Activated naive CD4-positive, alpha-beta T cell treated with anti-CD3 and anti-CD28 coated beads for 36 hours (primary cell): ENCODE measurements at regions of chr5 and their contacts with region 1.

Region 1: GRCh38 chr5:129094087-129094923 is at the start of gene ISOC1:
- DNase-seq: peak; percentile 91
- H3K4me3 Mint-ChIP-seq: peak within 1 kb of the TSS; percentile 83
- H3K27ac Mint-ChIP-seq: peak within 1 kb of the TSS; percentile 37
- H3K4me1 Mint-ChIP-seq: peaks cover 32% of the 10 kb centered on the region
- H3K27me3 Mint-ChIP-seq: peaks cover 6% of the 10 kb centered on the region
- total RNA-seq, gene ISOC1: 25.9 to 27.4 TPM

Region 2: DNA sequence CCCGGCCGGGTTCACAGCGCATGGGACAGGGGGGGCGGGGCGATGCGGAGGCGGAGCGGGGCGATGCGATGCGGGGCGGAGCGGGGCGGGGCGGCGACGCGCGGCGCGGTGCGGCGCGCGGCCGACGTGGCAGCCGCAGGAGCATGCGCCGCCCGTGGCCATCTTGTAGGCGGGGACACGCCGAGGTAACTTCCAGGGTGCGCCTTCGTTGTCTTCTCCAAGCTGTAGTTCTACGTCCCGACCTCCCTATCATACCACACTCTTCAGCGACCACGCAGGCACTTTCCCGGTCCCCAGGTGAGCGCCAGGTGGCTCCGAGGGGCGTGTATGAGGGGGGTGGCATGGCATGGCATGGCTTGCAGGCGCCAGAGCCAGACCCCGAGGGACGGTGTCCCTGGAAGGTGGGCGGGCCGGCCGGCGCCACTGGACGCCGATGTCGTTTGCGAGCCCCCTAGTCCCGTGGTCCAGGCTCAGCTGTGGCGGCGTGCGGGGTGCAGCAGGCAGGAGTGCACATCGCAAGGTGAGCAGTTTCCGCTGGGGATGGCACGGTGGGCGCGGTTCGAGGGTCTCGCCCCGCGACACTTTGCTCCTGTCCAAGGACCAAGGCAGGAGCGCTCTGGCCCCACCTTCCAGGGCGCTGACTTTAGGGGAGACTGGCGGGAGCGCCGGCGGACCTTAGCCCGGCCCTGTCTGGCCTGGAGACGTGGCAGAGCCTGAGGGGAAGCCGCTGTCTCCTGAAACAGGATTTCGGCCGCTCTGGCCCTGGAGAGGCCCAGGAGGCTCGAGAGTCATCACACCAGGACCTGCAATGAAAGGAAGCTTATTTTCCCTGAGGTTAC is 1576.6 kb before region 1 on chr5 and contains the start of gene PRRC1:
- CTCF ChIA-PET with region 1: no interaction called
- intact Hi-C with region 1: loop called (anchors 5 kb)
- DNase-seq: peak; percentile 83
- H3K4me3 Mint-ChIP-seq: peak within 1 kb of the TSS; percentile 81
- H3K27ac Mint-ChIP-seq: peak within 1 kb of the TSS; percentile 63
- H3K4me1 Mint-ChIP-seq: peaks cover 31% of the 10 kb centered on the region
- H3K27me3 Mint-ChIP-seq: no peaks in the 10 kb centered on the region
- total RNA-seq, gene PRRC1: 34.1 to 35.1 TPM

Region 3: DNA sequence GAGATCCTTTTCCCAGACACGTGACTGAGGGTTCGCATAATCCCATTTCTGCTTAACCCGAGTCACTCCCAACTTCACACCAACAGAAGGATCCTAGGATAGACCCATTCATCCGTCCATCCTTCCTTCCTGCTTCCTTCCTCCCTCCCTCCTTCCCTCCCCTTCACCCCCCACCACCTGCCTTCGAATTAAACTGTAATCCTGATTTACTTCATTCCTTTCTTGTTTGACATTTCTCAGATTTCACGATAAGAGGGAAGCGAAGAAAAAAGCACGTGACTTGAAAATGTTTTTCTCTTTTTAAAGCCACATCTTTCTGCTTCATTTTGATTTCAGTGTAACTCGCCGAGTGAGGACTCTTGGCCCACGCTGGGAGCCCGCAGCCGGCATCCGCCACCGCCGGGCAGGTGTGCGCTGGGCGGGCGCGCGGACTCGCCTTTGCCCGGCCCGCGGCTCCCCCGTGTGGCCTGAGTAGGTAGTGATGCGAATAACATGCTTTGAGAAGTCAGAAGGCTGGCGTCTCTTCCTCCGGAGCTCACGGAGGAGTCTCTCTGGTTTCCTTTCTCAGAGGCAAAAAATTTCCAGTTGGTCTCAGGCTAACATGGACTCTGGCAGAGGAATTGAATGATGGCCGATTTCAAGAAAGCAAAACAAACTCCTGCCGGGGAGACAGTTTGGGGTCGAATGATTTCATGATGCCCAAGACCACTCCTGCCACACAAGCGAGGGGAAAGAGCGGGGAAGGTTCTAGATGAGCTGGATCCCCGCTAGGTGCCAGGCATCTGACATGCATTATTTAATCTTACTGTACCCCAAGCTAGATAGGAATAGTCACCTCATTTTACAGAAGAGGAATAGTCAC is 893.0 kb before region 1 on chr5:
- CTCF ChIA-PET with region 1: no interaction called
- intact Hi-C with region 1: loop called (anchors 10 kb)
- DNase-seq: peak; percentile 90
- H3K4me3 Mint-ChIP-seq: no peak overlapping the region
- H3K27ac Mint-ChIP-seq: no peak overlapping the region
- H3K4me1 Mint-ChIP-seq: peaks cover 32% of the 10 kb centered on the region
- H3K27me3 Mint-ChIP-seq: no peaks in the 10 kb centered on the region

Region 4: DNA sequence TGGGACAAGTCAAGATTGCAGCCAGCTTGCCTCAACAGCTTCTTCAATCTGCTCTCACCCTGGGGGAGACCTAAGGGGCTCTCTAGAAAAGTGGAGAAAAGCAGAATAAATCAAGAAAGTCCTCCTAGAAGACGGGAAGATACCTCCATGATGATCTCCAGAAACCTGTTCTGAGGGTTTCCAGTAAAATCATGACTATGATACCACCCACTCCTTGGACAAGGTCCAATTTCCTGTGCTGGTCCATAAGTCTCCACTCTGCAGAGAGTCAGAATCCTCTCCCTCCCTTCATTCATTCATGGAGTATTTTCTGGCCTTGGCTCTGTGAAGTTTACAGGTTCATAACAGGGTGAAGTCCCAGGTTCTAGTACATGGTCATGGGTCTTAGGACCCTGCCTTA is 842.1 kb before region 1 on chr5:
- CTCF ChIA-PET with region 1: no interaction called
- intact Hi-C with region 1: no loop called
- DNase-seq: no peak
- H3K4me3 Mint-ChIP-seq: no peak overlapping the region
- H3K27ac Mint-ChIP-seq: no peak overlapping the region
- H3K4me1 Mint-ChIP-seq: no peaks in the 10 kb centered on the region
- H3K27me3 Mint-ChIP-seq: peaks cover 15% of the 10 kb centered on the region

Region 5: GRCh38 chr5:128777052-128777451 is 317.3 kb before region 1 on chr5:
- CTCF ChIA-PET with region 1: no interaction called
- intact Hi-C with region 1: loop called (anchors 1 kb)
- DNase-seq: peak; percentile 4
- H3K4me3 Mint-ChIP-seq: no peak overlapping the region
- H3K27ac Mint-ChIP-seq: no peak overlapping the region
- H3K4me1 Mint-ChIP-seq: peaks cover 15% of the 10 kb centered on the region
- H3K27me3 Mint-ChIP-seq: no peaks in the 10 kb centered on the region

Region 6: DNA sequence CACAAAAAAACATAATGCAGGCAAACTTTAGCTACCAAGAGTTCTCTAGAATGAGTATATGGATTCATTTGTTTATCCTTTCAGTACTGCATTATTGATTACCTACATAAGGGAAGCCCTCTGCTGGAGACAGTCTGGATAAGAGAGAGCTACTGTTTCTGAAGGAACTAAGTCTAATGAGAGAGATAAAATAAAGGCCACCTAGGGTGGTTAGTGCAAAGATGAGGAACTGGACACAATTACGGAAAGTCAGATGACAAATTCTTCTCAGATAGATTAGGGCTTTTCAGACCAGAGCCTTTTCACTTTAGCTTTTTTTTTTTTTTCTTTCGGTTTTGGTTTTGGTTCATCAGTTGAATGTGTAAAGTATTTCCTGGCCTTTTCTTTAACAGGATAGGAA is 31.5 kb after region 1 on chr5:
- CTCF ChIA-PET with region 1: interaction called, 24 read pairs
- intact Hi-C with region 1: loop called (anchors 1 kb)
- DNase-seq: no peak
- H3K4me3 Mint-ChIP-seq: peak overlapping the region; percentile 6
- H3K27ac Mint-ChIP-seq: peak overlapping the region; percentile 62
- H3K4me1 Mint-ChIP-seq: peaks cover 10% of the 10 kb centered on the region
- H3K27me3 Mint-ChIP-seq: no peaks in the 10 kb centered on the region

Region 7: GRCh38 chr5:129216001-129216400 is 121.7 kb after region 1 on chr5:
- CTCF ChIA-PET with region 1: no interaction called
- intact Hi-C with region 1: no loop called
- DNase-seq: no peak
- H3K4me3 Mint-ChIP-seq: no peak overlapping the region
- H3K27ac Mint-ChIP-seq: no peak overlapping the region
- H3K4me1 Mint-ChIP-seq: no peaks in the 10 kb centered on the region
- H3K27me3 Mint-ChIP-seq: no peaks in the 10 kb centered on the region

Region 8: DNA sequence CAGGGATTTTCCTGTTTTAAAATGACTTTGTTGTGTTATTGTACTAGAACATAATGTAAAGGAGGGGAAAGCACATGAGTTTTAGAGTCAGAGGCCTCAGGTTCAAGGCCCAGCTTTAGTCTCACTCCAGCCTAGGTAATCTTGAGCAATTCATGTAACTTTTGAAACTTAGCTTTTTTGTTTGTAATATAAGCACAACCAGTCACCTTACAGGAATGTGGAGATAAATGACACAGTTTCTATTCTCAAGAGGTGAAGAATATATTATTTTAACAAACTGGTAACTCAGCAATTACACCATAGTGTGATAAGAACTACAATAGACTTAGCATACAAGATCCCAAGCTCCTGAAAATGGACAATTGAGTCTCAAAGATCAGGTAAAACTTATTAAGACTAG is 417.0 kb after region 1 on chr5:
- CTCF ChIA-PET with region 1: no interaction called
- intact Hi-C with region 1: no loop called
- DNase-seq: no peak
- H3K4me3 Mint-ChIP-seq: no peak overlapping the region
- H3K27ac Mint-ChIP-seq: no peak overlapping the region
- H3K4me1 Mint-ChIP-seq: no peaks in the 10 kb centered on the region
- H3K27me3 Mint-ChIP-seq: no peaks in the 10 kb centered on the region

Region 9: GRCh38 chr5:129852747-129853352 is 758.5 kb after region 1 on chr5:
- CTCF ChIA-PET with region 1: no interaction called
- intact Hi-C with region 1: loop called (anchors 10 kb)
- DNase-seq: peak; percentile 85
- H3K4me3 Mint-ChIP-seq: no peak overlapping the region
- H3K27ac Mint-ChIP-seq: no peak overlapping the region
- H3K4me1 Mint-ChIP-seq: no peaks in the 10 kb centered on the region
- H3K27me3 Mint-ChIP-seq: peaks cover 18% of the 10 kb centered on the region

Region 10: DNA sequence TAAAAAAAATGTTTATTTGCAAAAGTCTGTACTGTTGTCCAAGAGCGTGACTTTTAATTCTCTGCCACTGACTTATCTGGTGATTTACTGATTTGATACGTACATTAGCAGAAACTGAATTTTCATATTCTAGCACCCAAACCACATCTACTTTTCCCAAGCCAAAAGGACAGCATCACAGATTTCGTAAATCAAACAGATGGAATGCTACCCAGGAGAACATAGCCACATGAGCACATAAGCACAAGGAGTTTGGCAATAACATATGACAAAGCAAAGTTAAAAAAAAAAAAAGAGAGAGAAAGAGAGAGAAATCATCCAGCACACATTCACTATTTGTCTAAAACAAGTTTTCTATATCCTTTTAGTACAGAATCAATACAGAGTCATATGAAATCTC is 1987.1 kb after region 1 on chr5:
- CTCF ChIA-PET with region 1: no interaction called
- intact Hi-C with region 1: loop called (anchors 5 kb)
- DNase-seq: no peak
- H3K4me3 Mint-ChIP-seq: no peak overlapping the region
- H3K27ac Mint-ChIP-seq: no peak overlapping the region
- H3K4me1 Mint-ChIP-seq: peaks cover 18% of the 10 kb centered on the region
- H3K27me3 Mint-ChIP-seq: no peaks in the 10 kb centered on the region